ENCODE measurements at regions of chr5 and their contacts with region 1.

Region 1: GRCh38 chr5:67182301-67182790 is 14.3 kb downstream of the CD180 start:
- DNase-seq: peak in 1 of 9 donors; percentile 35
- ATAC-seq: peak; percentile 31
- H3K4me3 ChIP-seq: no peak overlapping the region
- H3K4me3 Mint-ChIP-seq: peak overlapping the region in 6 of 10 donors; percentile 29 to 71 (median 66)
- H3K27ac ChIP-seq: peak overlapping the region; percentile 58
- H3K27ac Mint-ChIP-seq: peak overlapping the region; percentile 31 to 93 (median 88)
- H3K4me1 ChIP-seq: peaks cover 5 to 34% of the 10 kb centered on the region in 2 donors
- H3K4me1 Mint-ChIP-seq: peaks cover 29 to 74% (median 62%) of the 10 kb centered on the region in 7 donors
- H3K27me3 ChIP-seq: no peaks in the 10 kb centered on the region
- H3K27me3 Mint-ChIP-seq: no peaks in the 10 kb centered on the region

Region 2: GRCh38 chr5:67196537-67197059 is 14.3 kb after region 1 on chr5 and contains the start of gene CD180:
- CTCF ChIA-PET with region 1: no interaction called
- POLR2A ChIA-PET with region 1: interaction called, 9 read pairs
- intact Hi-C with region 1: loop called (anchors 1 kb)
- DNase-seq: no peak
- ATAC-seq: no peak
- H3K4me3 ChIP-seq: no peak within 1 kb of the TSS
- H3K4me3 Mint-ChIP-seq: peak within 1 kb of the TSS in 1 of 10 donors; percentile 34
- H3K27ac ChIP-seq: no peak within 1 kb of the TSS
- H3K27ac Mint-ChIP-seq: peak within 1 kb of the TSS in 4 of 9 donors; percentile 31 to 81 (median 52)
- H3K4me1 ChIP-seq: peaks cover 6 to 8% of the 10 kb centered on the region in 2 donors
- H3K4me1 Mint-ChIP-seq: peaks cover 36 to 79% (median 62%) of the 10 kb centered on the region in 7 donors
- H3K27me3 ChIP-seq: no peaks in the 10 kb centered on the region
- H3K27me3 Mint-ChIP-seq: no peaks in the 10 kb centered on the region
- total RNA-seq, gene CD180: 0.37 to 6.4 (median 1.7) TPM

Region 3: DNA sequence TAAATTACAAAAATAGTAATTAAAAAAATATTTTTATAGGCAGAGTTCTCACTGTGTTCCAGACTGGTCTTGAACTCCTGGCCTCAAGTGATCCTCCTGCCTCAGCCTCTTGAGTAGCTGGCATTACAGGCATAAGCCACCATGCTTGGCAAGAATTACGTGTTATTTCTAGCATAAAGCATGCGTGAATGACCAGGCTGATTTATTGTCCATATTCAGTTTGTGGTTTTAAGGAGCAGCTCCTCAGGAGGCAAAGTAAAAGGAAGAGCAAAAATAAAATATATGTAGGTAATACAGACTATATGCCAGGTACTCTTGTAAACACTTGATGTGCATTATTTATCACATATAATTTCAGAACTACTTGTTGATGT is 21.3 kb after region 1 on chr5:
- CTCF ChIA-PET with region 1: interaction called, 3 read pairs
- POLR2A ChIA-PET with region 1: interaction called, 15 read pairs
- intact Hi-C with region 1: loop called in 1 of 2 experiments (anchors 2 kb)
- DNase-seq: no peak
- ATAC-seq: no peak
- H3K4me3 ChIP-seq: no peak overlapping the region
- H3K4me3 Mint-ChIP-seq: peak overlapping the region in 5 of 10 donors; percentile 27 to 85 (median 57)
- H3K27ac ChIP-seq: peak overlapping the region; percentile 64
- H3K27ac Mint-ChIP-seq: peak overlapping the region in 8 of 9 donors; percentile 17 to 98 (median 91)
- H3K4me1 ChIP-seq: peaks cover 53 to 77% of the 10 kb centered on the region in 2 donors
- H3K4me1 Mint-ChIP-seq: peaks cover 59 to 100% (median 91%) of the 10 kb centered on the region in 7 donors
- H3K27me3 ChIP-seq: no peaks in the 10 kb centered on the region
- H3K27me3 Mint-ChIP-seq: peaks cover 0 to 2% (median 0%) of the 10 kb centered on the region in 5 donors

Region 4: DNA sequence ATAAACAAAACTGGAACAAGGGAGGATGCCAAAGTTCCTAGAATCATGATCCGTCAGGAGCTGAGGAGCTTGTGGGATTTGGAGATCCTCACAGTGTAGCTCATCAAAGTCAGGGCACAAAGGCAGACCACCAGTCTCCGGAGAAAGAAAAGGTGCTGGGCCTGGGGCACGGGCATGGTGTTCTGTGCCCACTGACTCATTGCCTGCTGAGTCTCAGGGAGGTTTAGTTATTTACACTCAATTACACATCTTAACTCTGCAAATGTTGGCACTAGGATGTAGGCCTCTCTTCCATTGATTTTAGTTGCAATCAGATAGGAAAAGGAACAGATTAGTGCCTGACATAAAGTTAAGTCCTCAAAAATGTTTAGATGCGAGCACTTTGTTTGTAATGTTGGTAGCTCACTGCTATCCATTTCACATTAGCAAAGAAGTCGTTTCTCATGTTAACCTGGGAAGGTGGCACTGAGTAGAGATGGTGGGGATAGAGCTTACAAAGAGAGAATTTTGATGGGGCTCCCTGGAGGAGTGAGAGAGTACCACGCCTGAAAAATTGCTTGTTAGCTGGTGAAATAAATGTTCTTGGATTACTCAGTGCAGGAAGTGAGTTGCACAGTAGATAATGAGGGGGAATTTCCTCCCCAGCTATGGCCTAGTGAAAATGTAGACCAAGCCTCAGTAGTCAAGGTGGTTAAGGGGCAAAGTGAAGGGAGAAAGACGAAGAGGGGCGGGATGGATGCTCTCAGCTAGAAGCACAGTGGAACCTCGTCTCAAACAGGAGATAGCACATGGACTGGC is 123.8 kb after region 1 on chr5:
- CTCF ChIA-PET with region 1: no interaction called
- POLR2A ChIA-PET with region 1: no interaction called
- intact Hi-C with region 1: no loop called
- DNase-seq: no peak
- ATAC-seq: no peak
- H3K4me3 ChIP-seq: no peak overlapping the region
- H3K4me3 Mint-ChIP-seq: no peak overlapping the region
- H3K27ac ChIP-seq: no peak overlapping the region
- H3K27ac Mint-ChIP-seq: peak overlapping the region in 1 of 9 donors; percentile 24
- H3K4me1 ChIP-seq: no peaks in the 10 kb centered on the region
- H3K4me1 Mint-ChIP-seq: peaks cover 3 to 23% (median 18%) of the 10 kb centered on the region in 7 donors
- H3K27me3 ChIP-seq: no peaks in the 10 kb centered on the region
- H3K27me3 Mint-ChIP-seq: no peaks in the 10 kb centered on the region

Measured in naive thymus-derived CD4-positive, alpha-beta T cell (primary cell).